Activated naive CD4-positive, alpha-beta T cell treated with anti-CD3 and anti-CD28 coated beads for 36 hours (primary cell): ENCODE measurements at regions of chr22 and their contacts with region 1.

Region 1: GRCh38 chr22:20970939-20971657 is 4.0 kb downstream of the AIFM3 start:
- DNase-seq: no peak
- H3K4me3 Mint-ChIP-seq: no peak overlapping the region
- H3K27ac Mint-ChIP-seq: no peak overlapping the region
- H3K4me1 Mint-ChIP-seq: no peaks in the 10 kb centered on the region
- H3K27me3 Mint-ChIP-seq: no peaks in the 10 kb centered on the region

Region 2: GRCh38 chr22:20946080-20946986 is 24.8 kb before region 1 on chr22:
- CTCF ChIA-PET with region 1: no interaction called
- intact Hi-C with region 1: no loop called
- DNase-seq: no peak
- H3K4me3 Mint-ChIP-seq: no peak overlapping the region
- H3K27ac Mint-ChIP-seq: peak overlapping the region; percentile 11
- H3K4me1 Mint-ChIP-seq: peaks cover 61% of the 10 kb centered on the region
- H3K27me3 Mint-ChIP-seq: no peaks in the 10 kb centered on the region

Region 3: DNA sequence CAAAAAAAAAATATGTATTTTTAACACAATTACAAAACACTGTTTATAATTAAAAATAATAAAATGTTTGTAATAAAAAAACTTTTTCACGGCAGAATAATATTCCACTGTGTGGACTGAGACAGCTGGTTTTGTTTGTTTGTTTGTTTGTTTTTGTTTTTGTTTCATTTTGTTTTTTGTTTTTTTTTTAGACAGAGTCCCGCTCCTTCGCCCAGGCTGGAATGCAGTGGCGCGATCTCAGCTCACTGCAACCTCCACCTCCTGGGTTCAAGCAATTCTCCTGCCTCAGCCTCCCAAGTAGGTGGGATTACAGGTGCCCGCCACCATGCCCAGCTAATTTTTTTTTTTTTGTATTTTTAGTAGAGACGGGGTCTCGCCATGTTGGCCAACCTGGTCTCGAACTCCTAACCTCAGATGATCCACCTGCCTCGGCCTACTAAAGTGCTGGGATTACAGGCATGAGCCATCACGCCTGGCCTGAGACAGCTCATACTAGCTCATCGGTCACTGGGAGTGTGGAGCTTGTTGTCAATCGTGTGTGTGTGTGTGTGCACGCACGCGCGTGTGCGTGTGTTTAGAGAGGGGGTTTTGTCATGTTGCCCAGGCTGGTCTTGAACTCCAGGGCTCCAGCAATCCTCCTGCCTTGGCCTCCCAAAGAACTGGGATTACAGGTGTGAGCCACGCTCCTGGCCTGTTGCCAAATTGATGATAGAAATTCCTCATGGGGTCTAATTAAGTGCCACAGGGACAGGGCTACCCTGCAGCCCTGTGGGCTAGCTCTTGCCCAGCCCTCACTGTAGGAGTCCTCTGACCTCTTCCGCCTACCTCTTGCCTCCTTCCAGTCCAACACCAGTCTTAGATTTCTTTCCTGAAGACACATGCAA is 11.3 kb before region 1 on chr22:
- CTCF ChIA-PET with region 1: interaction called, 17 read pairs
- intact Hi-C with region 1: no loop called
- DNase-seq: no peak
- H3K4me3 Mint-ChIP-seq: no peak overlapping the region
- H3K27ac Mint-ChIP-seq: no peak overlapping the region
- H3K4me1 Mint-ChIP-seq: peaks cover 17% of the 10 kb centered on the region
- H3K27me3 Mint-ChIP-seq: peaks cover 22% of the 10 kb centered on the region